A549 (cell line): ENCODE measurements at regions of chr3 and their contacts with region 1.

Region 1: DNA sequence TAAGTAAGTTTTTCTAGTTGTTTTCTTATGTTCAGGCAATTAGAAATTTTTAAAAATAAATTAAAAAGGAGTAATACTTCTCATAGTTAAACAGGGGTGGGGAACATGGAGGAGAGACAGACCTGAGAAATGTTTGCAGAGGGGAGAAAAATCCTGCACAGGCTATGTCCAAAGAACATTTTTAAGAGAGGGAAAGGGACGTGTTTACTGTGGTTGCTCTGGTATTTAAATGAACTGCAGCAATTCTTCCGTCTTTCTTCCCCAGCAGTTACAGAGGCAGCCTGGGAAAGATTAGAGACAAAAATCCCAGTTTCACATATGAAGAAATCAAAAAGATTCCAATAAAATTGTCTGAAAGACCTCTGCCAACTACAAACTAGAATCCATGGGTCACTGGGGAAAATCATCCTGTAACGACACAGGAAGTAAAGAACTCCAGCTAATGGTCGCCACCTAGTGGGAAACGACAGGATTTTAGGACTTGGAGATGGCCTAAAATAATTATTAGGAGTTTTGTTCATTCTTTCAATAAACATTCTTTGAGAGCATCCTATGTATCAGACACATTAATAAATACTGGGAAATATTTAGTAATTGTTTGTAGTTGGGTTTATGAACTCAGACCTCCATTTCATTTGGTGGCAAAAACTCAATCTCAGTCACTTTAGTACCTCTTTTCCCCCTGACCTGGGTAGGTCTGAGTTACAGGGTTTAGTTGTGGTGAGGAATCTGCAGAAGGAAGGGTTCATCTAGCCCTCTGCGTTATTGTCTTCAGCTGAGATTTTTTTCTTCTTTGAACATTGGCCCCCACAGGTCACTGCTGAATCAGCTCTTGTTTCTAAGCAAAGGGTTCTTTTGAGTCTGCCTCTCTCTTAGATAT is 69.9 kb upstream of the GOLIM4 start:
- DNase-seq: peak; percentile 15 to 66
- ATAC-seq: peak; percentile 71 to 87; a peak in 5 of 6 replicates
- H3K4me3 ChIP-seq: no peak overlapping the region
- H3K27ac ChIP-seq: peak overlapping the region in 1 of 2 experiments; percentile 60; a peak in 1 of 6 replicates
- H3K4me1 ChIP-seq: no peaks in the 10 kb centered on the region
- CTCF ChIP-seq: peak; percentile 79
- EP300 ChIP-seq: no peak
- POLR2A ChIP-seq: no peak
- RAD21 ChIP-seq: peak; percentile 79 to 83

Region 2: DNA sequence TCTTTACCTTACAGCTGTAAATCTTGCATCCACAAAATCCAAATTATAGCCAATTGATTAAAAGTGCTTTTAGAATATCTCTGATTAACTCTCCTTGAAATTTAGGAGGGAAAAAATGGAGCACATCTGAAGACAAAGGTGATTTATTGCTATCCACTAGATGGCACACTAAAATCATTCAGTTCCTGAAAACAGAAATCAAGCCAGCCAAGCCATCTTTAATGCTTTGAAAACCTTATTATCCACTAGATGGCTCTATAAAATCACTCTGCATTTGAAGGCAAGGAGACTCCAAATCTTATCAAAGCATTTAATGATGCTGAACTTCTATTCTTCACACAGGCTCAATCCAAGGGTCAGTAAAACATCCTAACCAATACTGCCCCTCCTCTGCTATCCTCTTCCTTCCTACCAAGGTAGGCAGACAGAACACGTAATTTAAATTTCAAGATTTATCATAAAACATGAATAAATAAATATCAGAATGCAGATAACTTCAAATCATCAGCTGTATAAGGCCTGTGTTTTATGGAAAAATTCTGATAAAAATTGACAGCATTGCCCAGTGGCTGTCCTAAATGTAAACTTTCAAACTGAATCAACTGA is 118.3 kb before region 1 on chr3:
- CTCF ChIA-PET with region 1: interaction called, 92 read pairs
- POLR2A ChIA-PET with region 1: no interaction called
- DNase-seq: peak; percentile 21 to 74
- ATAC-seq: peak; percentile 77 to 88
- H3K4me3 ChIP-seq: no peak overlapping the region
- H3K27ac ChIP-seq: no peak overlapping the region
- H3K4me1 ChIP-seq: no peaks in the 10 kb centered on the region
- CTCF ChIP-seq: peak; percentile 95
- EP300 ChIP-seq: no peak
- POLR2A ChIP-seq: no peak
- RAD21 ChIP-seq: peak; percentile 88 to 91

Region 3: DNA sequence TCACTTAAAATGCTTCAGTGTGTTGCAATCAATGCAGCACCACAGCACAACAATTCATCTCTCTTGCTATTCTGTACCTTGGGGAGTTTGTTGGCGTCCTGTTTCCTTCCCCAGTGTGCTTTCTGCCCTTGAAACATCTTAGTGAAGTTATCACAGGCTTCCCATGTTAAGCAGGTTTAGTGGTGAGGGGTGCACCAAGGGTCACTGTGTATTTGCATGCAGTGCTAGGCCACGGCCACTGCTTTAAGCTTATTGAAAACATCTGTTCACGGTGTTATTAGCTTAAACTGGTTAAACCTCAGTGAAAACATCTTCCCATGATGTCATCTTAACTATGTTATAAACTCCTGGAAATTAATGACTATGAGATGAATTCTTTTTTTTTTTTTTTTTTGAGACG is 147.4 kb after region 1 on chr3:
- CTCF ChIA-PET with region 1: no interaction called
- POLR2A ChIA-PET with region 1: no interaction called
- DNase-seq: no peak
- ATAC-seq: no peak
- H3K4me3 ChIP-seq: no peak overlapping the region
- H3K27ac ChIP-seq: no peak overlapping the region
- H3K4me1 ChIP-seq: no peaks in the 10 kb centered on the region
- CTCF ChIP-seq: no peak
- EP300 ChIP-seq: no peak
- POLR2A ChIP-seq: no peak
- RAD21 ChIP-seq: no peak

Region 4: DNA sequence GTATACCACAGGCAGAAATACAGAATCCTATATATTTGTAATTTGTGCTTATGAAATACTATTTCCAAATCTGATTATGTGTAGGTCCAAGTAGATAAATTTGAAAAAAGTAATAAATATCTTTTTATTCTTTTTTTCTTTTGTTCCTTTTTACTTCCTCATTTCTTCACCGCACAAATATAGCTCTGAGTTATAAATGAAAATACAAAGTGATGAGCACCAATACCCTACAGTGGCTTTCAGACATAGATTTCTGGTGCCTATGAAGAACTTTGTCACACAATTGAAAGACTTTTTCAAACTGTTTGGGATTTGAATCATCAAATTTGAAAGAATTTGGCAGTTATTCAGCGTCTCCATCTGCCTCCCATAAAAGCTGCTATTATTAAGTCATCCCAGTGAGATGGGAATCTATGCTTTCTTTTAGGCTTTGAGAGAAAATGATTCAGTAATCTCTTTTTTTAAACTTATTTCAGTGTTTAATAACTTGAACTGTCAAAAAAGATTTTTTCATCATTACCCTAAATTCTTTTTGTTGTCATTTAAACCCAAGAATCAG is 293.7 kb after region 1 on chr3:
- CTCF ChIA-PET with region 1: no interaction called
- POLR2A ChIA-PET with region 1: no interaction called
- DNase-seq: no peak
- ATAC-seq: no peak
- H3K4me3 ChIP-seq: no peak overlapping the region
- H3K27ac ChIP-seq: no peak overlapping the region
- H3K4me1 ChIP-seq: no peaks in the 10 kb centered on the region
- CTCF ChIP-seq: no peak
- EP300 ChIP-seq: no peak
- POLR2A ChIP-seq: no peak
- RAD21 ChIP-seq: no peak

Region 5: DNA sequence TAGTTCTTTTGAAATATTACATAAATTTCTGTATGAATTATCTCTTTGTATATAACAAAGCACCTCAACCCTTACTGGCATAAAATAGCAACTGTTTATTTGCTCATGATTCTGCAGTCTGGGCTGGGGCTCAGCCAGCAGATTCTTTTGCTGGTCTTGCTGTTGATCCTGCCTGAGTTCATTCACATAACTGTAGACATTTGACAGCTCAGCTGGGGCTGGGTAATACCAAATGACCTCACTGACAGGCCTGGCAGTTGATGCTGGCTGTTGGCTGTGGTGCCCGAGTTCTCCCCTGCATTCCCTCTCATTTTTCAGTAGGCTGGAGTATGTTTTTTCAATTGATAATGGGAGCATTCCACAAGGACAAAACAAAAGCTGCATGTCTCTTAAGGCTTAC is 380.0 kb after region 1 on chr3:
- CTCF ChIA-PET with region 1: no interaction called
- POLR2A ChIA-PET with region 1: no interaction called
- DNase-seq: no peak
- ATAC-seq: no peak
- H3K4me3 ChIP-seq: no peak overlapping the region
- H3K27ac ChIP-seq: no peak overlapping the region
- H3K4me1 ChIP-seq: no peaks in the 10 kb centered on the region
- CTCF ChIP-seq: no peak
- EP300 ChIP-seq: no peak
- POLR2A ChIP-seq: no peak
- RAD21 ChIP-seq: no peak